Naive thymus-derived CD4-positive, alpha-beta T cell (primary cell): ENCODE measurements at regions of chr13 and their contacts with region 1.

Region 1: DNA sequence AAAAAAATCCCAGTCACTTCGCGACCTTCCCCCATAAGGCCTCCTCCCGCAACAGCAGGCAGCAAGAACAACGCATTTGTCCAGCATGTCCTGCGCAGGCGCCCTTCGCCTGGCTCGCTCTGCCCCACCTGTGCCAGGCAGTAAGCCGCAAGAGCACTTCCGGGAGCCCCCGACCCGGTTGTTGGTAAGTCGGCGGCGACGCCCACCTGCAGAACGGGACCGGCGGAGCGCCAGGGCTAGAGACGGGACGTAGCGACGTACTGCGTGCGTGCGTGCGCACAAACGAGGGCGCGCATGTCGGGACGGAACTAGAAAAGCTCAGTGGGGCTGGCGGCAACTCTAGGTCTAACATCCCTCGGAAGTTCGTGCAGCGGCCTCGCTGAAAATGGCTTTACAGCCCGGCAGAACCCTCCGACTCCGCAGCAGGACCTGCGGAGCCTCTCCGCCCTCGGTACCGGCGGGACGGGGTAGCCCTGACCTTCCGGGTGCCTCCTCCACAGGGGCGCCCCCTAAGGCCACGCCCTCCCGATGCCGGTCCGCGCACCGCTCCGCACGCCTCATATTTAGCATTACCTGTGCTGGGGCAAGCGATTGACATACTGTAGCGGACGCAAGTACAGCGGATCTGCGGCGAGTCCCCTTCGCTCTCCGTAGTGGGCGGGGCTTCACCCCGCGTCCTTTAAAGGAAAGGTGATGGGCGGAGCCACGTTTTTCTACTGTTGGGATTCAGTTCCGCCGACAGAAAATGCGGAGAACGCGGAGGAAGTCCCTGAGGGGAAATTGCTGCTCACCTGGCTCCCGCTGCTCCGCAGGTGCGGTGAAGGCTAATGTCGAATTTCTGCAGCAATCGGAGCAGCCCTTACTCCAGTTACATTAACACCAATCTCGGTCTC is at the start of gene MTIF3:
- DNase-seq: peak; percentile 90 to 99 (median 98)
- ATAC-seq: peak; percentile 89
- H3K4me3 ChIP-seq: peak within 1 kb of the TSS; percentile 82
- H3K4me3 Mint-ChIP-seq: peak within 1 kb of the TSS; percentile 89 to 96 (median 94)
- H3K27ac ChIP-seq: peak within 1 kb of the TSS; percentile 96
- H3K27ac Mint-ChIP-seq: peak within 1 kb of the TSS; percentile 94 to 100 (median 98)
- H3K4me1 ChIP-seq: peaks cover 35 to 41% of the 10 kb centered on the region in 2 donors
- H3K4me1 Mint-ChIP-seq: peaks cover 45 to 75% (median 56%) of the 10 kb centered on the region in 7 donors
- H3K27me3 ChIP-seq: no peaks in the 10 kb centered on the region
- H3K27me3 Mint-ChIP-seq: no peaks in the 10 kb centered on the region
- total RNA-seq, gene MTIF3: 28.4 to 89.6 (median 51.3) TPM

Region 2: GRCh38 chr13:26221721-26222519 is 1228.3 kb before region 1 on chr13 and contains the start of gene RNF6:
- CTCF ChIA-PET with region 1: no interaction called
- POLR2A ChIA-PET with region 1: no interaction called
- intact Hi-C with region 1: loop called (anchors 1 to 10 kb)
- DNase-seq: peak; percentile 83 to 92 (median 89)
- ATAC-seq: peak; percentile 95
- H3K4me3 ChIP-seq: peak within 1 kb of the TSS; percentile 96
- H3K4me3 Mint-ChIP-seq: peak within 1 kb of the TSS; percentile 95 to 100 (median 100)
- H3K27ac ChIP-seq: peak within 1 kb of the TSS; percentile 97
- H3K27ac Mint-ChIP-seq: peak within 1 kb of the TSS; percentile 93 to 100 (median 100)
- H3K4me1 ChIP-seq: peaks cover 16 to 17% of the 10 kb centered on the region in 2 donors
- H3K4me1 Mint-ChIP-seq: peaks cover 25 to 54% (median 49%) of the 10 kb centered on the region in 7 donors
- H3K27me3 ChIP-seq: no peaks in the 10 kb centered on the region
- H3K27me3 Mint-ChIP-seq: peaks cover 0 to 3% (median 0%) of the 10 kb centered on the region in 5 donors
- total RNA-seq, gene RNF6: 31.0 to 45.6 (median 44.6) TPM

Region 3: GRCh38 chr13:27130979-27131623 is 319.1 kb before region 1 on chr13:
- CTCF ChIA-PET with region 1: no interaction called
- POLR2A ChIA-PET with region 1: no interaction called
- intact Hi-C with region 1: loop called in 1 of 2 experiments (anchors 1 kb)
- DNase-seq: peak in 3 of 9 donors; percentile 13 to 71 (median 46)
- ATAC-seq: peak; percentile 90
- H3K4me3 ChIP-seq: no peak overlapping the region
- H3K4me3 Mint-ChIP-seq: peak overlapping the region in 5 of 10 donors; percentile 29 to 71 (median 47)
- H3K27ac ChIP-seq: no peak overlapping the region
- H3K27ac Mint-ChIP-seq: peak overlapping the region in 5 of 9 donors; percentile 60 to 87 (median 76)
- H3K4me1 ChIP-seq: peaks cover 0 to 14% of the 10 kb centered on the region in 2 donors
- H3K4me1 Mint-ChIP-seq: peaks cover 46 to 89% (median 82%) of the 10 kb centered on the region in 7 donors
- H3K27me3 ChIP-seq: no peaks in the 10 kb centered on the region
- H3K27me3 Mint-ChIP-seq: no peaks in the 10 kb centered on the region

Region 4: GRCh38 chr13:27270594-27271520 is 179.3 kb before region 1 on chr13 and contains the start of gene RASL11A:
- CTCF ChIA-PET with region 1: interaction called, 3 read pairs
- POLR2A ChIA-PET with region 1: interaction called, 4 read pairs
- intact Hi-C with region 1: loop called in 1 of 2 experiments (anchors 1 kb)
- DNase-seq: peak; percentile 53 to 87 (median 76)
- ATAC-seq: peak; percentile 92
- H3K4me3 ChIP-seq: peak within 1 kb of the TSS; percentile 90
- H3K4me3 Mint-ChIP-seq: peak within 1 kb of the TSS; percentile 88 to 96 (median 92)
- H3K27ac ChIP-seq: peak within 1 kb of the TSS; percentile 75
- H3K27ac Mint-ChIP-seq: peak within 1 kb of the TSS; percentile 29 to 82 (median 75)
- H3K4me1 ChIP-seq: peaks cover 0 to 4% of the 10 kb centered on the region in 2 donors
- H3K4me1 Mint-ChIP-seq: peaks cover 9 to 35% (median 19%) of the 10 kb centered on the region in 7 donors
- H3K27me3 ChIP-seq: peaks cover 0 to 3% of the 10 kb centered on the region in 2 donors
- H3K27me3 Mint-ChIP-seq: peaks cover 0 to 45% (median 9%) of the 10 kb centered on the region in 5 donors
- total RNA-seq, gene RASL11A: 0.44 to 3.0 (median 0.86) TPM

Region 5: DNA sequence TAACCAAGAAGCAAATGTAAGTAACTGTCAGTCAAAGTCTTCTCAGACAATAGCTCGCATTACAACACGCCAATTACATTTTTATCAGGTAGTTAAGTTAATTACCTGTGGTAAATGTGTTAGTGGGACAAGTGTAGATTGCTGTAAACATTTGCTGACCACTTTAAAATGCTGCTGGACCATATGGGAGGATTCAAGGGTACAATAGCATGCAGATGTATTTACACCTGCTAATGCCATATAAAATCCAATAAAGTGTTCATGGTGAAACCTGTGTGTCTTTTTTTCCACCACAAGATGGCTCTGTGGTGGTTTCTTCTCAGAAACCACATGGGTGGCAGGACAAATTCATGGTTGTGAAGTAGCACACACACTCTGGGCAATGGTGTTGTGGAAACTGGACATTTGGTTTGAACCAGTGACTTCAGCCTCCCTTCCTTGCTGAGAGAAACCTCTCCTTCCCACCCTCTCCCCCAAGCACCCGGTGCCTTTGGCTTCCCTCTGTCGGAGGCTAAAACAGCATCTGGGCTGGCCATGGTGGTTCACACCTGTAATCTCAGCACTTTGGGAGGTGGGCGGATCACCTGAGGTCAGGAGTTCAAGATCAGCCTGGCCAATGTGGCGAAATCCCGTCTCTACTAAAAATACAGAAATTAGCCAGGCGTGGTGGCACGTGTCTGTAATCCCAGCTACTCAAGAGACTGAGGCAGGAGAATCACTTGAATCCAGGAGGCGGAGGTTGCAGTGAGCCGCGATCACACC is 43.8 kb before region 1 on chr13:
- CTCF ChIA-PET with region 1: no interaction called
- POLR2A ChIA-PET with region 1: interaction called, 5 read pairs
- intact Hi-C with region 1: loop called (anchors 1 kb)
- DNase-seq: peak in 7 of 9 donors; percentile 25 to 57 (median 48)
- ATAC-seq: peak; percentile 71
- H3K4me3 ChIP-seq: no peak overlapping the region
- H3K4me3 Mint-ChIP-seq: no peak overlapping the region
- H3K27ac ChIP-seq: no peak overlapping the region
- H3K27ac Mint-ChIP-seq: no peak overlapping the region
- H3K4me1 ChIP-seq: no peaks in the 10 kb centered on the region
- H3K4me1 Mint-ChIP-seq: peaks cover 0 to 6% (median 0%) of the 10 kb centered on the region in 7 donors
- H3K27me3 ChIP-seq: no peaks in the 10 kb centered on the region
- H3K27me3 Mint-ChIP-seq: peaks cover 0 to 37% (median 9%) of the 10 kb centered on the region in 5 donors

Region 6: DNA sequence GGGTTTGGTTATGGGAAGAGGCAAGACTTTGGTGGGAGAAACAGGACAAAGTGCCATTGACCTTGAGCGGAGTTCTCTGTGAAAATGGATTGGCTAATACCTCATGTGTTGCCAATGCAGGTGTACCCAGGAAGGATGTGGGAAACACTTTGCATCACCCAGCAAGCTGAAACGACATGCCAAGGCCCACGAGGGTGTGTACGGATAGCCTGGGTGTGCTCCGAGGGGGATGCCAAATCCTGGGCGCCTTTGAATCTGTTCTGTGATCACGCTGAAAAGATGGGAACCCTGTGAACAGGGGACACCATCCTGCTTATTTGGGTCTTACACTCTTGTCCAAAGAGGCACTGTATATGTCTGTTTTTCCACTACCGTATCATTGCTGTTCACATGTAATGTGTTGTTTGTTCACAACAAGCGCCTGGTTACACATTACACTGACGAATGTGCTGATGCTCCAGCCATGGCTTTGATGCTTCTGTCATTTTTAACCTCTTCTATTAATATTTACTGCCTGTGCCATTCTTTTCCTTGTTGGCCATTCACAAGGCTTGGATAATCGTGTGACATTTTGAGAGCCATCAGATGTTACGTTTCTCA is 17.5 kb before region 1 on chr13:
- CTCF ChIA-PET with region 1: interaction called, 38 read pairs
- POLR2A ChIA-PET with region 1: interaction called, 477 read pairs
- intact Hi-C with region 1: no loop called
- DNase-seq: no peak
- ATAC-seq: no peak
- H3K4me3 ChIP-seq: no peak overlapping the region
- H3K4me3 Mint-ChIP-seq: peak overlapping the region in 6 of 10 donors; percentile 10 to 51 (median 38)
- H3K27ac ChIP-seq: peak overlapping the region; percentile 39
- H3K27ac Mint-ChIP-seq: peak overlapping the region; percentile 46 to 90 (median 78)
- H3K4me1 ChIP-seq: peaks cover 20 to 35% of the 10 kb centered on the region in 2 donors
- H3K4me1 Mint-ChIP-seq: peaks cover 11 to 56% (median 49%) of the 10 kb centered on the region in 7 donors
- H3K27me3 ChIP-seq: no peaks in the 10 kb centered on the region
- H3K27me3 Mint-ChIP-seq: no peaks in the 10 kb centered on the region

Region 7: GRCh38 chr13:27533155-27533643 is 83.0 kb after region 1 on chr13:
- CTCF ChIA-PET with region 1: interaction called, 3 read pairs
- POLR2A ChIA-PET with region 1: interaction called, 3 read pairs
- intact Hi-C with region 1: loop called in 1 of 2 experiments (anchors 5 kb)
- DNase-seq: peak in 7 of 9 donors; percentile 17 to 51 (median 42)
- ATAC-seq: peak; percentile 83
- H3K4me3 ChIP-seq: no peak overlapping the region
- H3K4me3 Mint-ChIP-seq: peak overlapping the region in 6 of 10 donors; percentile 26 to 52 (median 44)
- H3K27ac ChIP-seq: no peak overlapping the region
- H3K27ac Mint-ChIP-seq: no peak overlapping the region
- H3K4me1 ChIP-seq: peaks cover 0 to 9% of the 10 kb centered on the region in 2 donors
- H3K4me1 Mint-ChIP-seq: peaks cover 0 to 12% (median 10%) of the 10 kb centered on the region in 7 donors
- H3K27me3 ChIP-seq: no peaks in the 10 kb centered on the region
- H3K27me3 Mint-ChIP-seq: peaks cover 0 to 17% (median 5%) of the 10 kb centered on the region in 5 donors